CD8-positive, alpha-beta memory T cell (primary cell): ENCODE measurements at regions of chr11 and their contacts with region 1.

Region 1: GRCh38 chr11:62601394-62602140 is at the start of gene MTA2:
- DNase-seq: peak; percentile 98 to 100 (median 99)
- H3K4me3 ChIP-seq: peak within 1 kb of the TSS; percentile 89
- H3K4me3 Mint-ChIP-seq: peak within 1 kb of the TSS; percentile 91 to 97 (median 93)
- H3K27ac ChIP-seq: peak within 1 kb of the TSS; percentile 86
- H3K27ac Mint-ChIP-seq: peak within 1 kb of the TSS; percentile 93 to 98 (median 96)
- H3K4me1 ChIP-seq: peaks cover 29% of the 10 kb centered on the region
- H3K4me1 Mint-ChIP-seq: peaks cover 49 to 69% (median 52%) of the 10 kb centered on the region in 3 donors
- H3K27me3 ChIP-seq: no peaks in the 10 kb centered on the region
- H3K27me3 Mint-ChIP-seq: peaks cover 0 to 5% of the 10 kb centered on the region in 2 donors
- total RNA-seq, gene MTA2: 248 to 263 TPM

Region 2: DNA sequence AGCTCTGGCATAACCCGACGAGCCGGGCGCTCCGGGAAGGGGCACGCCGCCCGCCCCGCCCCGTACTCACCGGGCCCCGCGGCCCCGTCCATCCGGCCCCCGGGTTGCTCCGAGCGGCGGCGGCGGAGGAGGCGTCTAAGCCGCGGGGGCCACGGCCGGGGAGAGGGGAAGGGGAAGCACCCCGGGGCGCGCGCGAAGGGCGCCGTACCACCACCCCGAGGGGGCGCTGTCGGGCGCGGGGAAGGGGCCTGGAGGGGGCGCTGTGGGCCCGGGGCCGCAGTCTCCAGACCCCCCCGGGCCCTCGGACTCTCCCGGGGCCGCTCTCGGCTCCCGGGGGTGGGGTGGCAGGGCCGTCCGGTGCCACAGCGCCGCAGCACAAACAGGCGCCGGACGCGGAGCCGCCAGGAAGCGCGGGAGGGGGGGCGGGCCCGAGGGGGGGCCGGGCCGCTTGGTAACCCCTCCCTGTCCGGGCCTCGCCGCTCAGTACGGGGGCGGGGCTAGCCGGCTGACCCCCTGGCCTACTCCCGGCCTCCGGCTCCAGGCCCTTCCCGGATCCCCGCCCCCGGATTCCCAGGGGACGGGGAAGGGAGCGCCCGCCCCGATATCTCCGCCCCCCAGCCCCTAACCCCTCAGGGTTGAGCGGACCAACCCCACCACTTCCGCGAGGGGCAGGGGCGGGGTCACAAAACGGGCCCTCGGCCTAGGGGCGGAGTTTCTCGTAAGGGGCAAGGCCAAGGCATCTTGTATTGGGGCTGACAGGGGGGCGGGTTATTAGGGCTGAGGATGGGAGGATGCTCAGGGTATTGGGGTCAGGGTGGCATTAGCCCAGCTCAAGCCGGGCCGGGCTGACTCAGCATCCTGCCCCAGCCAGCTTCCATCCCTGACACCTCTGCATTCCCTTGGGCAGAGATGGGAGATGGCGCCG is 11.1 kb after region 1 on chr11 and contains the starts of genes EML3 and ROM1:
- CTCF ChIA-PET with region 1: interaction called, 7 read pairs
- POLR2A ChIA-PET with region 1: interaction called, 24 read pairs
- DNase-seq: peak; percentile 81 to 93 (median 85)
- H3K4me3 ChIP-seq: peak within 1 kb of the TSS; percentile 76
- H3K4me3 Mint-ChIP-seq: peak within 1 kb of the TSS; percentile 89 to 99 (median 95)
- H3K27ac ChIP-seq: peak within 1 kb of the TSS; percentile 83
- H3K27ac Mint-ChIP-seq: peak within 1 kb of the TSS; percentile 92 to 99 (median 97)
- H3K4me1 ChIP-seq: peaks cover 30% of the 10 kb centered on the region
- H3K4me1 Mint-ChIP-seq: peaks cover 39 to 64% (median 42%) of the 10 kb centered on the region in 3 donors
- H3K27me3 ChIP-seq: no peaks in the 10 kb centered on the region
- H3K27me3 Mint-ChIP-seq: no peaks in the 10 kb centered on the region
- total RNA-seq, gene EML3: 133 to 134 TPM
- total RNA-seq, gene ROM1: 4.9 to 5.3 TPM